Activated B cell treated with CpG ODN at 0.5 μM for 24 hours (primary cell): ENCODE measurements at regions of chr21 and their contacts with region 1.

Region 1: GRCh38 chr21:32278518-32279376 is at the start of gene MIS18A:
- DNase-seq: peak; percentile 96
- ATAC-seq: peak; percentile 96
- H3K4me3 Mint-ChIP-seq: peak within 1 kb of the TSS; percentile 98
- H3K27ac Mint-ChIP-seq: peak within 1 kb of the TSS; percentile 88
- H3K4me1 Mint-ChIP-seq: peaks cover 16% of the 10 kb centered on the region
- H3K27me3 Mint-ChIP-seq: no peaks in the 10 kb centered on the region
- CTCF ChIP-seq: no peak
- total RNA-seq, gene MIS18A: 6.8 and 7.7 TPM in 2 replicates

Region 2: DNA sequence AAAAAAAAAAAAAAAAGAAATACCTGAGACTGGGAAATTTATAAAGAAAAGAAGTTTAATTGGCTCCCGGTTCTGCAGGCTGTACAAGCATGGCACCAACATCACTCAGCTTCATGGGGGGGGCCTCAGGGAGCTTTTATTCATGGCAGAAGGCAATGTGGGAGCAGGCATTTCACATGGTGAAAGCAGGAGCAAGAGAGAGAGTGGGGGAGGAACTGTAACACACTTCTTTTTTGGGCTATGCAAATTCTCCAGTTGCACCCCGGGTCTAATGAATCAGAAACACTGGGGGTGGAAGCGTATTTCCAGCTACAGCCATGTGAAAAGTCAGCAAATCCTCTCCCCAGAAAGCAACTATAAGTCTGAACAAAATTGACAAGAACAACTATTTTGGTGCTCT is 631.1 kb before region 1 on chr21:
- CTCF ChIA-PET with region 1: no interaction called
- POLR2A ChIA-PET with region 1: no interaction called
- intact Hi-C with region 1: loop called (anchors 2 kb)
- DNase-seq: no peak
- ATAC-seq: peak; percentile 14
- H3K4me3 Mint-ChIP-seq: peak overlapping the region; percentile 64
- H3K27ac Mint-ChIP-seq: no peak overlapping the region
- H3K4me1 Mint-ChIP-seq: peaks cover 11% of the 10 kb centered on the region
- H3K27me3 Mint-ChIP-seq: no peaks in the 10 kb centered on the region
- CTCF ChIP-seq: no peak

Region 3: DNA sequence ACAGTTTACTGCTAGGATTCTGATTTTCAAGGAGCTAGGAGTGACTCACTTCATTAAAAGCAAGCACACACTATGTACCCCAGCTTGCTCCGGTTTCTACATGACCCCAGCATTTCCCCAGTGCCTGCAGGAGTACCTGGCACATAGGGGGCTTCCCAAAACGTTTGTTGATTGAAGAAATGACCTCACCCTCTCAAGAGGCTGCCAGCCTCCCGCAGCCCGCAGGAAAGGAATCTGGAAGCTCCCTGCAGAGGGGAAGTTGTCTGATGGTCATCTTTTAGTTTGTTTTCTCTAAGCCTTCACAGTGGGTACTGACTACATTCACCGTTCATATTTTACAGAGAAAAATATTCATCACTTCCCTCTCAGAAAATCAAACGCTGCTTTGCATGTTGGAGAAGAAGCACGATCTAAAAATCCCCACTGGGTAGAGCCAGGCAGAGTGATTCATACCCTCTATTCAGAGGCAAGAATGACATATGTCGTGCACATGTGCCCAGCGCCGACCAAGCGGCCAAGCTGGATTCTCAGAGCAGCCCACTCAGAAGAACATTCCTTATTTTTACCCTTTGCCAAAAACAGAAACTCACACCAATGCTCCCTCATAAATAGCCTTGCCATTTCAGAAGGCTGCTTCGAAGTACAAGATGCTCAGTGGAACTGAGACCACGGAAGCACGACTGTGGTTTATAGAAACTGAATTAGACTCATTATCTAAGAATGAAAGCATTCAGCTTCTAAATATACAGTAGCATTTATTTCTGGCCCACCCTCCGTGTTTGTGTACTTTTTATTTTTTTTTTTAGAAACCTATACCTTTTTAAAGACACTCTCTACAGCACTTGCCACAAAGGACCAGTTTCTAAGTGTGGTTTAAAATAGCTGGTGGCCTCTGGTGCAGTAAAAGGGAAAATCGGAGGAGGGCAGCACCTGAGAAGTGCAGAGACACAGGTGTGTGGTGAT is 143.1 kb before region 1 on chr21:
- CTCF ChIA-PET with region 1: no interaction called
- POLR2A ChIA-PET with region 1: no interaction called
- intact Hi-C with region 1: no loop called
- DNase-seq: no peak
- ATAC-seq: peak; percentile 37
- H3K4me3 Mint-ChIP-seq: no peak overlapping the region
- H3K27ac Mint-ChIP-seq: no peak overlapping the region
- H3K4me1 Mint-ChIP-seq: no peaks in the 10 kb centered on the region
- H3K27me3 Mint-ChIP-seq: peaks cover 11% of the 10 kb centered on the region
- CTCF ChIP-seq: no peak

Region 4: DNA sequence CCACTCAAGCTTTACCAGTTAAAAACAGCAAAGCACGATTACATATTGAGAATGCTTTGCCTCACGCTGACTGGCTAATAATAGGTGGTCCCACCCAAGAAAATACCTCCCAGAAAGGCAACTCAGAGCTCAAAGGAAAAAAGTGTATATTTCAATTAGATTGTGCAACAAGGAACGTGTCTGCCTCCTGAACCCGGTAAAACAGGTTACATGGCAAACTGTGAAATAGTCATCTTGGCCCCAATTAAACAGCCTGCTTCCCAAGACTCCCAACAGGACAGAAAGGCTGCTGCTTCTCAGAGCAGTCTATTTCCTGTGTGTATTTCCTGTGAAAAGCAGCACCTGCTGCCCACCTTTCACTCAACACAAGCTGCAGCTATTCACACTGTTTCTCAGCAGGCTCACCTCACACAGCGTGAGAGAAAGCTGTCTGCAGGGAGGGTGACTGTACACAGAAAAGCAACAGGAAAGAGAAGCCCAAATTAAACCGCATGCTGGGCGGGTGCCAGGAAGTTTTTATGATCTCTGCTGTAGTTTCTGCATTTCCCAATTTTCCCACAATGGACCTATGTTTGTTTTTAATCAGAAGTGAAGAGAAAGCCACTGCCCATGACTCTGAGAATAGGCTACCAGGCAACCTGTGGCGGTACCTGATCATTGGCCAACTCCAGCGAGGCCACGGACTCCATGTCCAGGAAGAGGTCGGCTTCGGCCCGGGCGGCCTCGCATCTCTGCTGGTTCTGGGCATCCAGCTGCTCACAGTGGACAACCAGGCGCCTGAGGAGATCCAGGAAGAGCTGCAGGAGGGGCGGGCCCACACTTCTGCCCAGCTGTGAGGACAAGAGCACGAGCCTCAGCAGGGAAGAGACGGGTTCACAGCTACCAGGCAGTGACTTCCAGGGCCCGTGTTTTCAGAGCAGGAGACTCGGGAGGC is 70.2 kb after region 1 on chr21:
- CTCF ChIA-PET with region 1: no interaction called
- POLR2A ChIA-PET with region 1: no interaction called
- intact Hi-C with region 1: no loop called
- DNase-seq: no peak
- ATAC-seq: no peak
- H3K4me3 Mint-ChIP-seq: no peak overlapping the region
- H3K27ac Mint-ChIP-seq: no peak overlapping the region
- H3K4me1 Mint-ChIP-seq: peaks cover 5% of the 10 kb centered on the region
- H3K27me3 Mint-ChIP-seq: no peaks in the 10 kb centered on the region
- CTCF ChIP-seq: no peak

Region 5: GRCh38 chr21:32392880-32393676 is 114.3 kb after region 1 on chr21 and contains the start of gene URB1:
- CTCF ChIA-PET with region 1: no interaction called
- POLR2A ChIA-PET with region 1: no interaction called
- intact Hi-C with region 1: loop called (anchors 1 kb)
- DNase-seq: peak; percentile 97
- ATAC-seq: peak; percentile 97
- H3K4me3 Mint-ChIP-seq: peak within 1 kb of the TSS; percentile 87
- H3K27ac Mint-ChIP-seq: peak within 1 kb of the TSS; percentile 83
- H3K4me1 Mint-ChIP-seq: peaks cover 41% of the 10 kb centered on the region
- H3K27me3 Mint-ChIP-seq: peaks cover 6% of the 10 kb centered on the region
- CTCF ChIP-seq: no peak
- total RNA-seq, gene URB1: 18.1 and 22.2 TPM in 2 replicates

Region 6: GRCh38 chr21:32962268-32962667 is 683.5 kb after region 1 on chr21:
- CTCF ChIA-PET with region 1: no interaction called
- POLR2A ChIA-PET with region 1: no interaction called
- intact Hi-C with region 1: no loop called
- DNase-seq: no peak
- ATAC-seq: no peak
- H3K4me3 Mint-ChIP-seq: no peak overlapping the region
- H3K27ac Mint-ChIP-seq: no peak overlapping the region
- H3K4me1 Mint-ChIP-seq: no peaks in the 10 kb centered on the region
- H3K27me3 Mint-ChIP-seq: peaks cover 49% of the 10 kb centered on the region
- CTCF ChIP-seq: no peak